Activated CD8-positive, alpha-beta memory T cell treated with anti-CD3 and anti-CD28 coated beads, Interleukin-2, amount 10 ng/mL, durations not matched to agents 7 days and 5 days (primary cell): ENCODE measurements at regions of chr17 and their contacts with region 1.

Region 1: GRCh38 chr17:8383143-8383822 is at the start of gene RPL26:
- DNase-seq: peak; percentile 98
- ATAC-seq: peak; percentile 95
- H3K4me3 Mint-ChIP-seq: peak within 1 kb of the TSS; percentile 96
- H3K27ac Mint-ChIP-seq: peak within 1 kb of the TSS; percentile 86
- H3K4me1 Mint-ChIP-seq: peaks cover 71% of the 10 kb centered on the region
- H3K27me3 Mint-ChIP-seq: no peaks in the 10 kb centered on the region
- total RNA-seq, gene RPL26: 1,612 to 1,903 TPM

Region 2: DNA sequence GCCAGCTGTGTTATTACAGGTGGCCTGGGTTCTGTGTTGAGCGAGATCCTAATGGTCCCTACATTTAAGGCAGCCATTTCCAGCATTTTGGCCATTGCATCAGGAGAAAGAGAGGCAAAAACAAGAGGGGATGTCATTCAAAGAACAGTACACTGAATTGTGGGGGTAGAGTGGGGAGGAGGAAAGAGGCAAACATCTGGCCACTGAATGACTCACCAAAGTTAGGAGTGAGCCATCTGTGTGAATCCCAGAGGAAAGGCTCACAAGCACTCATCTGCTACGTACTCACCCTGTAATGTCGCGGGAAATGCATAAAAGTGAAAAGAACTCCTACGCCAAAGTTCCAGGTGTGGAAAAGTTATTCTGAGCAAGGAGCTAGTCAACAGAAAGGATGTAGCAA is 23.5 kb before region 1 on chr17:
- CTCF ChIA-PET with region 1: no interaction called
- DNase-seq: no peak
- ATAC-seq: no peak
- H3K4me3 Mint-ChIP-seq: no peak overlapping the region
- H3K27ac Mint-ChIP-seq: no peak overlapping the region
- H3K4me1 Mint-ChIP-seq: peaks cover 15% of the 10 kb centered on the region
- H3K27me3 Mint-ChIP-seq: peaks cover 4% of the 10 kb centered on the region

Region 3: GRCh38 chr17:8393420-8394241 is 10.3 kb after region 1 on chr17:
- CTCF ChIA-PET with region 1: interaction called, 41 read pairs
- DNase-seq: peak; percentile 80
- ATAC-seq: peak; percentile 94
- H3K4me3 Mint-ChIP-seq: no peak overlapping the region
- H3K27ac Mint-ChIP-seq: peak overlapping the region; percentile 94
- H3K4me1 Mint-ChIP-seq: peaks cover 12% of the 10 kb centered on the region
- H3K27me3 Mint-ChIP-seq: peaks cover 24% of the 10 kb centered on the region

Region 4: GRCh38 chr17:8435245-8436168 is 52.2 kb after region 1 on chr17 and contains the start of gene NDEL1:
- CTCF ChIA-PET with region 1: interaction called, 12 read pairs
- DNase-seq: peak; percentile 99
- ATAC-seq: peak; percentile 98
- H3K4me3 Mint-ChIP-seq: peak within 1 kb of the TSS; percentile 98
- H3K27ac Mint-ChIP-seq: peak within 1 kb of the TSS; percentile 97
- H3K4me1 Mint-ChIP-seq: peaks cover 24% of the 10 kb centered on the region
- H3K27me3 Mint-ChIP-seq: no peaks in the 10 kb centered on the region
- total RNA-seq, gene NDEL1: 58.8 to 59.0 TPM

Region 5: DNA sequence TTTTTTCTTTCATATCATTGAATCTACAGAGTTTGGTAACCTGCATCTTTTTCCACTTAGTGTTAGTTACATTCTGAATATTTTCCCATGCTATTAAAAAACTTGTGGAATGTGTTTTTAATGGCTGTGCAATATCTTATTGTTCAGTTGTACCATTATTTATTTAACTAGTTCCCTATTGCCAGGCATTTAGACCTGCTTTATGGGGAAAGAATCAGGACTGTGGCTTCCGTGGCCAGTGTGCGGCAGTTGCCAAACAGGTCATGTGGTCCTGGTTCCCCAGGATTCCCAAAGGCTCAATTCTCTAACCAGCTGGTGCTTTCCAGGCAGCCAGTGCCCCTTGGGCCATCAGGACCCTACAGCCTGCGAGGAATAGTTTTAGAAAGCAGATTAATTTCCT is 83.2 kb after region 1 on chr17:
- CTCF ChIA-PET with region 1: no interaction called
- DNase-seq: no peak
- ATAC-seq: no peak
- H3K4me3 Mint-ChIP-seq: no peak overlapping the region
- H3K27ac Mint-ChIP-seq: no peak overlapping the region
- H3K4me1 Mint-ChIP-seq: no peaks in the 10 kb centered on the region
- H3K27me3 Mint-ChIP-seq: no peaks in the 10 kb centered on the region

Region 6: GRCh38 chr17:8745586-8746500 is 362.6 kb after region 1 on chr17:
- CTCF ChIA-PET with region 1: interaction called, 30 read pairs
- DNase-seq: peak; percentile 83
- ATAC-seq: peak; percentile 82
- H3K4me3 Mint-ChIP-seq: peak overlapping the region; percentile 84
- H3K27ac Mint-ChIP-seq: peak overlapping the region; percentile 92
- H3K4me1 Mint-ChIP-seq: peaks cover 11% of the 10 kb centered on the region
- H3K27me3 Mint-ChIP-seq: peaks cover 10% of the 10 kb centered on the region